ENCODE measurements at regions of chr3 and their contacts with region 1.

Region 1: DNA sequence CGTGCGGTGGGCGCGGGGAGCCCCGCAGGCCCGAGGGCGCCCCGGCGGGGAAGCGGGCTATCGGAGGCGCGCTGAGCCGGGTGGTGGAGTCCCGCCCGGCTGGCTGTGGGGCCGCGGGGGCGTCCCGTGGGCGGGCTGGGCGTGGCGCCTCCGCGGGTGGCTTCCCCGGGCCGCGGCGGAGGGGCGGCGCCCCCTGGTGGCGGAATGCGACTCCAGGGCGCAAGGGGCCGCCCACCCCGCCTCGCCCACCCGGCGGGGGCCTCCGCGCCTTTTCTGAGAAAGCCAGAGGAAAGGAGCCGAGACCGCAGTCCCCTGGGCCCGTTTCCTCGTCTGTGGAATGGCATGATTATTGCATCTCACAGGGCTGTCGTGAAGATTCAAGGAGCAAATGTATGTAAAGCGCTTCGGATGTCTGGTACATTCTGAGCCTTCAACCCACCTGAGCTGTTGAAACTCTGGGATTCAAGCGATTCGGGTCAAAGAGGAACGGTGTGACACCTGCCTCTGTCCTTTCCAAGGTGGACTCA is 31.9 kb upstream of the RAB6B start:
- DNase-seq: no peak
- H3K4me3 ChIP-seq: peak overlapping the region; percentile 45
- CTCF ChIP-seq: peak; percentile 64

Region 2: DNA sequence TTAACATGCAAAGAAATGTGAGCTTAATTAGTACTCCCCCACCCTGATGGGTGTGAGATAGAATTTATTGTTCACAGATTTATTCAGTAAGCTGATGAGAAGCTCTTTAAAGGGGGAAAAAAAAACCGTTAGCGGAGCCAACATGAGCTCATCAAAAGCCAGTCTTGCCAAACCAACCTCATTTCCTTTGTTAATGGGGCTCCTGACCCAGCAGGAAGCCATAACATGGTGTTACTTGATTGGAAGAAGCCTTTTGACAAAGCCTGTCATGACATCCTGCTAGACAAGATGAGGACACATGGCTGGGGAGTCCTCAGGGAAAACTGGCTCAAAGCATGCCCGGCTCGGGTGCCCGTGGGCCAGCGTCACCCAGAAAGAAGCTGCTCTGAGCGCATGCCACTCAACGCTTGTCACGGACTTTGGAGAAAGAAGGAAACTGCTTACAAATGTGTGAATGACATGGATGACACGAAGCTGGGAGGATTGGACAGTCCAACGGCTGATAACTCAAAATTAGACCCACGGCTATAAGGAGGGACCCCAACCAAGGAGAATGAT is 37.5 kb after region 1 on chr3:
- in situ Hi-C with region 1: loop called (anchors 5 kb)
- DNase-seq: peak; percentile 60
- H3K4me3 ChIP-seq: no peak overlapping the region
- CTCF ChIP-seq: no peak

Region 3: GRCh38 chr3:134029256-134029733 is 101.7 kb after region 1 on chr3:
- in situ Hi-C with region 1: no loop called
- DNase-seq: no peak
- H3K4me3 ChIP-seq: peak overlapping the region; percentile 65
- CTCF ChIP-seq: no peak

Region 4: GRCh38 chr3:134212906-134213665 is 285.5 kb after region 1 on chr3:
- in situ Hi-C with region 1: loop called (anchors 25 kb)
- DNase-seq: peak; percentile 53
- H3K4me3 ChIP-seq: no peak overlapping the region
- CTCF ChIP-seq: peak; percentile 99

Region 5: GRCh38 chr3:134485718-134486576 is 558.3 kb after region 1 on chr3 and contains the starts of genes ANAPC13 and CEP63:
- in situ Hi-C with region 1: loop called (anchors 25 kb)
- DNase-seq: peak; percentile 98
- H3K4me3 ChIP-seq: peak within 1 kb of the TSS; percentile 57
- CTCF ChIP-seq: no peak

Measured in astrocyte of the cerebellum (primary cell).